Head of caudate nucleus (tissue), 42 donors: ENCODE measurements at regions of chr17 and their contacts with region 1.

Region 1: GRCh38 chr17:78112518-78113226 is 15.9 kb downstream of the TMC6 start:
- DNase-seq: peak; percentile 56 to 96 (median 86)

Region 2: DNA sequence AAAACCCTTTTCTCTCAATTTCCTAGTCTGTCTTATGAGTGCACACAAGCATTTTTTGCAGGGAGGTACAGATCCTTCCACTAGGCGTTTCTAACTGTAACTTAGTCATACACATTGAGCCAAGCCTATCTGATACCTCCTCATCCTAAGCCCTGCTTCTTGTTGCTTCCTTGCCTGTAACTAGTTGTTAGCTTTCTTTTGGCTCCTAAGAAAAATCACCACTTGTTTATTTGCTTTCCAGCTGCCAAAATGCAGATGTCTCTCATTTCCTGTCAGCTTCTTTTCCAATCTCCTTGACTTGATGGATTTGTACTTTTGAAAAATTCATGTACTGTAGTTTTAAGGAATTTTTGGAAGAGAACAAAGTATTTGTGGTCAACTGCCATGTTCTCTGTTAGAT is 80.5 kb before region 1 on chr17:
- intact Hi-C with region 1: no loop called
- DNase-seq: no peak

Region 3: DNA sequence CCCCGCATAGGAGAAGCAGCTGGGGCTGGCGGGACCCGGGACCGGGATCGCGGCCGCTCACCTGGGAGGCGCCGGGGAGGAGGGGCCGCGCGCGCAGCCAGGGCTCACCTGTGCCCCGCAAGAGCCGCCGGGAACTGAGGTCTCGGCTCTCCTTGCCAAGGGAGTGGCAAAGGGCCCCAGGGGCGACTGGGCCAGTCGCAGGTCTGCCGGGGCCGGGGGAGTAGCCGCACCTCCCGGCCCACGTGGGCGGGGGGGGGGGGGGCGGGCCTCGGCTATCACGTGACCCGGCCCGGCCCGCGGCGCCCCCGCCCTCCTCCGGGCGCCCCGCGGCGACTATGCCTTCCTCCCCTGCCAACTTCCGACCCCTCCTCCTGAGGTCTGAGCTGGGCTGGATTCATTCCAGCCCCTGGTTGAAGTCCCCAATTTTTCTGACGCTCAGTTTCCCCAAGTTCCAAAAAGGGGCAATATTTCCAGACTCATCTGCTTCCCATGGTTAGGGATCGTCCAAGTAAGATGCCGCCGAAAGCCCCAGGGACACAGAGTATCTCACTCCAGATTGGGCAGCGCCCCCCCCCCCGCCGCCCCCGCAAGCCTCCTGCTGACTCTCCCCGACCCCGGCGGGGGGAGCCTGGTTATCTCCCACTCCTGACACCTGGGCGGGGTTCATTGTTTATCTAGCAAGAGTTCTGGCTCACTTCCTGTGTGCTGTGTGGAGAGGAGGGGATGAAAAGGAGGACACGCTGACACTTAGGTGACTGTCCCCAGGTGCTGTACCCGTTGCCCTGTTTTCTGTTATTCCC is 16.1 kb after region 1 on chr17 and contains the start of gene TMC6:
- intact Hi-C with region 1: loop called (anchors 1 kb)
- DNase-seq: peak in 32 of 42 donors; percentile 40 to 83 (median 61)

Region 4: DNA sequence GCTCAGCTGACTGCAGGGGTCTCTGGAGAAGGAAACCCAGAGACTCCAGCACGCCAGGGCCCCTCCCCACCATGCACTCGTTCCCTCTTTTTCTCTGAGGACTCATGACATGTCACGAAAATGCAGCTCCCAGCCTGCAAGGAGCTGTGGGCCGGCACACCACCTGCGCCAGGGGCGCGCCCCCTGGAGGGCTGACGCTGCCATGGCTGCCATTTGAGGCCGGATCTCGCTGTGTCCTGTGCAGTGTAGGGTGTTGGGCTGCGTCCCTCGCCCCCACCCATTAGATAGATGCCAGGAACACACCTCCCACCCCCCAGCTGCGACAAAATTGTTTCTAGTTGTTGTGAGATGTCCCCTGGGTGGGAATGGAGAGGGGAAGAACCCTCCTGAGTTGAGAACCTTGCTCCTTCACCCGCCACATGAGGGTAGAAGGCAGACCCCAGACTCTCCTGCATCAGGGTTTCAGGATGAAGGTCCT is 63.9 kb after region 1 on chr17:
- intact Hi-C with region 1: loop called (anchors 5 kb)
- DNase-seq: peak; percentile 59 to 89 (median 78)

Region 5: GRCh38 chr17:78237401-78238012 is 124.8 kb after region 1 on chr17:
- intact Hi-C with region 1: loop called (anchors 5 kb)
- DNase-seq: peak; percentile 86 to 98 (median 94)